Common myeloid progenitor, CD34-positive (primary cell): ENCODE measurements at regions of chr12 and their contacts with region 1.

Region 1: GRCh38 chr12:52186145-52186840 is 5.5 kb downstream of the KRT80 start:
- DNase-seq: no peak
- H3K4me3 ChIP-seq: no peak overlapping the region
- H3K27ac ChIP-seq: no peak overlapping the region
- H3K4me1 ChIP-seq: peaks cover 0 to 14% (median 3%) of the 10 kb centered on the region in 4 experiments
- H3K27me3 ChIP-seq: no peaks in the 10 kb centered on the region

Region 2: DNA sequence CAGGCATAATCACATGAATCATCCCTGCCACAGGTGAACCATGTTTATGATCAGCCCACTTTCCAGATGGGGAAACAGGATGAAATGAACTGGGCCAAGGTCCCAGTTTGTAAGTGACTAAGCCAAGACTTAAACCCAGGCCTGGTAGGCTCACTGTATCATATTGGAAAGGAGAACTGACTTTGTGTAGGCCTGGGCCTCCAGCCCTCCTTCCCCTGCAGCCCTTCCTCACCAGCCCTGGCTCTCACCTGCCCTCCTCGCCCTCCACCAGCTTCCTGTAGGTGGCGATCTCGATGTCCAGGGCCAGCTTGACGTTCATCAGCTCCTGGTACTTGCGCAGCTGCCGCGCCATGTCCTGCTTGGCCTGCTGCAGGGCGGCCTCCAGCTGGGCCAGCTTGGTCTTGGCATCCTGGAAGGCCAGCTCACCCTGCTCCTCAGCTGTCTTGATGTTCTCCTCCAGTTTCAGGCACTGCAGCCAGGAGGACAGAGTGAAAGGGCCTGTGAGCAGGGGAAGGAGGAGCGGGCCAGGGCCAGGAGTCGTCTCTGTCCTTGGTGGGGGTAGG is 14.3 kb before region 1 on chr12:
- CTCF ChIA-PET with region 1: interaction called, 25 read pairs
- POLR2A ChIA-PET with region 1: no interaction called
- DNase-seq: peak in 2 of 3 donors; percentile 38 to 43
- H3K4me3 ChIP-seq: no peak overlapping the region
- H3K27ac ChIP-seq: no peak overlapping the region
- H3K4me1 ChIP-seq: peaks cover 0 to 12% (median 4%) of the 10 kb centered on the region in 4 experiments
- H3K27me3 ChIP-seq: no peaks in the 10 kb centered on the region

Region 3: DNA sequence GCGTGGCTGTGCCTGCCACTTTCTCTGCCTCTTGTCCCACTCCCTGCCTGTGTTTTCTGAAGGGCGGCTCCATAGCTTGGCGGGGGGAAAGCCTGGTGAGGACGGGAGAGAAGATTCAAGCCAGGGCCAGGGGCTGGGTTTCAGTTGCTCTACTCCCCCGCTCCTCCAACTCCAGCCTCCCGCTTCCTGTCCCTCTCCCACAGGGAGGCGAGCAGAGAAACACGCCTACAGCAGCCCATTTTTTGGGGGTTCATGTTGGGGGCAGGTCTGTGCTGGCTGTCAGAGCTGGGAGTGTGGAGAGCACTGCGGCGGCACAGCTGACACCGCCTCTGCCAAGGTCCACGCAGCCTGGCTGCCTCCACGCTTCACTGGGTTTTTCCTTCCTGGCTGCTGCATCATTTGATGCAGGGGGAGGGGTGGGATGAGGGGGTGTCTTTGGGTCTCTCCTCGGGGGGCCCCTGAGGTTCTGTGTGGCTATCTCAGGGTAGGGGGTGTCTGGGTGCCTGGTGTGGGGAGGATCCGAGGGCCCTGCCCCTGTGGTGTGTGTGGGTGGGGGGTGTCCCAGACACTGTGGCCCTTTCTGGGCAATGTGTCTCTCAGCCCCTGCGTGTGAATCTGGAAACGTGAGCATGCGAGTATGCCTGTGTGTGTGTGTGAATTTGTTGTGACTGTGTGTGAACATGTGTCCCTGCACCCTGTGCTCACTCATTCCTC is 16.2 kb after region 1 on chr12:
- CTCF ChIA-PET with region 1: interaction called, 13 read pairs
- POLR2A ChIA-PET with region 1: no interaction called
- DNase-seq: no peak
- H3K4me3 ChIP-seq: no peak overlapping the region
- H3K27ac ChIP-seq: no peak overlapping the region
- H3K4me1 ChIP-seq: peaks cover 4 to 45% (median 39%) of the 10 kb centered on the region in 4 experiments
- H3K27me3 ChIP-seq: peaks cover 0 to 10% (median 0%) of the 10 kb centered on the region in 5 experiments

Region 4: DNA sequence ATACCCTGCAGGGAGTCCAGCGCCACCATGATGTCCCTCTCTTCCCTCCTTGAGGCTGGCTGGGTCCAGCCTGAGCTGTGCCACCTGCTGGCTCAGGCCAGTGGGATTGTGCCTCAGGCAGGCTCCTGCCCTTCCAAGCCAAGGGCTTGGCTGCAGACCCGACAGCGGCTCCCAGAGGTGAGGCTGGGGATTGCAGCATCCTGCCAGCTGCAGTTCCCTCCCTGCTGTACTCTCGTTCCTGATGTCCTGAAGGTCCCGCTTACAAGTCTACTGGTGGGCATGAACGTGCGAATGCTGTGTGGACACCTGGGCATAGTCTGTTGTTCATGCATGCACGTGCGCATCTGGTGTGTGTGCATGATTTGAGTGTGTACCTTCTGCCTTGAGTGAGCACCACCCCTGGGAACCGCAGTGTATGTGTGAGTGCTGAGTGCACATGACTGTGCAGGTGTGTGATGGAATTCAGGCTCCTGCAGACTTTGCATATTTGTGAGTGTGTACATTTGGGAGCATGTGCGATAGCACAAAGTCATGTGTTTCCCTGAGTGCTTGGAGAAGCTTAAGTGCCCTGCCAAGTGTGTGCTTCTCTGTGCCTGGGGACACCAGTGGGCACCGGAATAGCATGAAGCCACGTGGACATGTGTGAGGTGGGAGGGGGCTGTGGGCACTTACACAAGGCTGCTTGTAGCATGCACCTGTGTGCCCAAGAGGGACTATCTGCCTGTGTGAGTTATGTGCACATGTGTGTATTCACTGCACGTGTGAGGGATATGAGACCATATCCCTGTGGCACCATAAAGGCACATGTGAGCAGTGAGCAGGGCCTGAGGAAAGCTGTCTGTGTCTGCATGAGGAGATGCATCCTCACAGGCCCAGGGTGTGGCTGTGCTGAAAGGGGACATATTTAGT is 27.5 kb after region 1 on chr12:
- CTCF ChIA-PET with region 1: interaction called, 11 read pairs
- POLR2A ChIA-PET with region 1: no interaction called
- DNase-seq: peak; percentile 61 to 78 (median 67)
- H3K4me3 ChIP-seq: no peak overlapping the region
- H3K27ac ChIP-seq: no peak overlapping the region
- H3K4me1 ChIP-seq: no peaks in the 10 kb centered on the region
- H3K27me3 ChIP-seq: peaks cover 0 to 7% (median 0%) of the 10 kb centered on the region in 5 experiments

Region 5: GRCh38 chr12:52354200-52354599 is 167.9 kb after region 1 on chr12:
- CTCF ChIA-PET with region 1: no interaction called
- POLR2A ChIA-PET with region 1: no interaction called
- DNase-seq: no peak
- H3K4me3 ChIP-seq: no peak overlapping the region
- H3K27ac ChIP-seq: no peak overlapping the region
- H3K4me1 ChIP-seq: peaks cover 0 to 26% (median 9%) of the 10 kb centered on the region in 4 experiments
- H3K27me3 ChIP-seq: peaks cover 0 to 9% (median 0%) of the 10 kb centered on the region in 5 experiments